AG04450 (cell line): ENCODE measurements at regions of chr14 and their contacts with region 1.

Region 1: DNA sequence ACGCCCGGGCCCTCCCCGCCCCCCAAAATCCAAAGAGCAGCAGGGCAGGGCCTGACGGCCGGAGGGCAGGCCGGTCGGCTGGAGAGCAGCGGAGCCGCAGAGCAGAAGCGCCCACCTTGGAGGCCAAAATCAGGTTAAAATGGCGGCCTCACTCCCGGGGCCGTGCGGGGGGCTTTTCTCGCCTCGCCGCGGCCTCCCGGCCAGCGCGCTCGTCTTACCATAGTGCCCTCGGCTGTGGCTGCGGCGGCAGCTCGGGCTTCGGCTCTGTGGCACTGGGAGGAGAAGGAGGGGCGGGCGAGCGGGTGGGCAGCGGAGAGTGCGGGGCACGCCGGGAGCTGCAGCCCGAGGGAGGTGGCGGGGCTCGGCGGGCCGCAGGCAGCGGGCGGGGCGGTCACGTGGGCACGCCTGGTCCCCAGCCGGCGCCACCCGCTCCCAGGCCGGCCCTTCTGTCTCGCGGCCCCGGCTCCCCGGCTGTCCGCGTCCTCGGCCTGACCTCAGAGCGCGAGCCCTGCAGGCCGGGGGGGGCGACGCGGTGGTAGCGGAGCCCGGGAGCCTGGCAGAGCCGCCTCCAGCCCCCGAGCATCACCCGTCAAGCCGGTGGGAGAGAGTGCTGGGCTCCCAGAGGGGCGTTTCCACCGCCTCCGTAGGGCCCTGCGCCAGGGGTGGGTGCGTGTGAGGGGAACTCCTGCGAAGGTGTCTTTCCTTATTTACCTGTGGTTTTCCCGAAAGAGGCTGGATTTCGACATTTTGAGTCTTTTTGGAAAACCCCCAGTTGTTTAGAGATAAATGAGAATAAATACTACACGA is at the start of gene CFL2:
- DNase-seq: no peak
- H3K4me3 ChIP-seq: peak within 1 kb of the TSS; percentile 75
- H3K27ac ChIP-seq: peak within 1 kb of the TSS; percentile 94
- H3K27me3 ChIP-seq: no peaks in the 10 kb centered on the region
- CTCF ChIP-seq: no peak
- polyA plus RNA-seq, gene CFL2: 163 and 229 TPM in 2 replicates

Region 2: GRCh38 chr14:34699873-34700621 is 14.5 kb before region 1 on chr14:
- CTCF ChIA-PET with region 1: interaction called, 3 read pairs
- POLR2A ChIA-PET with region 1: interaction called, 29 read pairs
- DNase-seq: peak; percentile 81
- H3K4me3 ChIP-seq: no peak overlapping the region
- H3K27ac ChIP-seq: peak overlapping the region; percentile 25
- H3K27me3 ChIP-seq: no peaks in the 10 kb centered on the region
- CTCF ChIP-seq: no peak

Region 3: DNA sequence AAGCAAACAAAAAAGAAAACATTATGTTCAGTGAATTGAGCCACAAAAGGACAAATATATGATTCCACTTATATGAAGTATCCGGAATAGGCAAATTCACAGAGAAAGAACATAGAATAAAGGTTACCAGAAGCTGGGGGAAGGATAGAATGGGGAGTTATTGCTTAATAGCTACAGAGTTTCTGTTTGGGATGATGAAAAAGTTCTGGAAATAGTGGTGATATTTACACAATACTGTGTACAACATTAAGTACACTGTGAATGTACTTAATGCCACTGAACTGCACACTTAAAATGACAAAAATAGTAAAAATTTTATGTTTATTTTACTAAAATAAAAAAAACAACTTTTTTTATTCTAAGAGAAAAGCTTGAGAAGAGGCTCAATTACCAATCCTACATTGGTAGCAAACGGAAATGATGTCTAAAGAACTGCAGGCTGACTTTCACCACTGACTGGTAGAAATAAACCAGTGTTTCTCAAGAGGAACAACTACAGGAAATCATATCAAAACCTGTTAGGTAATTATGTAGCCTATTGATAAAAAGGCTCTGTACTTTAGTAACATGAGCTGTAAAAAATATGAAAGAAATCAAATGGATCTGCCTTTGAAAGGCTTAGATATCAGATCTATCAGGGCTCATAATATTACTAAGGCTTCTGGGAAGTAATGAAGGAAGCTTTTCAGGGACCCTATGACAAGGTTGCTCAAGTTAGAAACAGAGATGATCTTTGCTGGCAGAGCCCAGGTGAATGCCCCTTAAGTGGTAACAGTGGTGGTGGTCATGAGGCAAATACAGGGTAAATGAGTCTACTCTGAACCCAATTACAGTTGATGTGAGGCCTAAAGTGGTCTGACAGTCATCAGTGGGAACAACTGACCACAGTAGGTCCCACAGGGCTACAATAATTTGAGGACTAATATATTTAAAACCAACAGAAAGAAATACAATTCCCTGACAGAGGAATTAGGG is 119.3 kb after region 1 on chr14:
- CTCF ChIA-PET with region 1: no interaction called
- POLR2A ChIA-PET with region 1: no interaction called
- DNase-seq: no peak
- H3K4me3 ChIP-seq: no peak overlapping the region
- H3K27ac ChIP-seq: no peak overlapping the region
- H3K27me3 ChIP-seq: no peaks in the 10 kb centered on the region
- CTCF ChIP-seq: no peak